Kidney (tissue), 22 donors: ENCODE measurements at regions of chr15 and their contacts with region 1.

Region 1: DNA sequence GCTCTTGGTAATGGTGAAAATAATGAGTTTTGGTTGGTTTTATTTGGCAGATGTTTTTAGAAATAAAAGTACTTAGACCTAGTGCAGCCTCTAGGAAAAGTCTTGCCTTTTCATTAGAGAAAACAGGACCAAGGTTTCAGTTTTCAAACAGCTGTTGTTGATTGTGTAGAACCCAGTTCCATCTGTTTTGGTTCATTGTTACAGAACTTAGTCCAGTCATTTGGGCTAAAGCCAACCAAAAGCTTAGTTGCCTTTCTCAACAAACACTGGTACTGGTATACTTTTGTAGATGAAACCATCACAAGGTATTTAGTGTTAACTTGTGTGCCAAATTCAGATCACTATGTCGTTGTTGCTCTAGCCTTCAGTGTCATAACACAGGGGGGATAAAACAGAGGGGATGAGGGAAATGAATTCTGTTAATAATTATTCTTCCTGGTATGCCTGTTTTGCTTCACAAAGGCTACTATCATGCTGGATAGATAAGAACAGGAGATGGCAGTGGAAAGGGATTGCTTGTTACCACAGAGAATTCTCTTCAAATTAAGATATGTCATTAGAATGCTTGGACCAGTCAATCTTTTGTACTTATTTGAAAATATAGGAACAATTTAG is 12.6 kb upstream of the APH1B start:
- DNase-seq: no peak
- H3K4me3 ChIP-seq: no peak overlapping the region
- H3K27ac ChIP-seq: no peak overlapping the region
- H3K4me1 ChIP-seq: no peaks in the 10 kb centered on the region
- H3K27me3 ChIP-seq: no peaks in the 10 kb centered on the region
- CTCF ChIP-seq: no peak

Region 2: GRCh38 chr15:63178030-63178429 is 86.8 kb before region 1 on chr15:
- intact Hi-C with region 1: no loop called
- DNase-seq: no peak
- H3K4me3 ChIP-seq: no peak overlapping the region
- H3K27ac ChIP-seq: no peak overlapping the region
- H3K4me1 ChIP-seq: no peaks in the 10 kb centered on the region
- H3K27me3 ChIP-seq: no peaks in the 10 kb centered on the region
- CTCF ChIP-seq: no peak

Region 3: DNA sequence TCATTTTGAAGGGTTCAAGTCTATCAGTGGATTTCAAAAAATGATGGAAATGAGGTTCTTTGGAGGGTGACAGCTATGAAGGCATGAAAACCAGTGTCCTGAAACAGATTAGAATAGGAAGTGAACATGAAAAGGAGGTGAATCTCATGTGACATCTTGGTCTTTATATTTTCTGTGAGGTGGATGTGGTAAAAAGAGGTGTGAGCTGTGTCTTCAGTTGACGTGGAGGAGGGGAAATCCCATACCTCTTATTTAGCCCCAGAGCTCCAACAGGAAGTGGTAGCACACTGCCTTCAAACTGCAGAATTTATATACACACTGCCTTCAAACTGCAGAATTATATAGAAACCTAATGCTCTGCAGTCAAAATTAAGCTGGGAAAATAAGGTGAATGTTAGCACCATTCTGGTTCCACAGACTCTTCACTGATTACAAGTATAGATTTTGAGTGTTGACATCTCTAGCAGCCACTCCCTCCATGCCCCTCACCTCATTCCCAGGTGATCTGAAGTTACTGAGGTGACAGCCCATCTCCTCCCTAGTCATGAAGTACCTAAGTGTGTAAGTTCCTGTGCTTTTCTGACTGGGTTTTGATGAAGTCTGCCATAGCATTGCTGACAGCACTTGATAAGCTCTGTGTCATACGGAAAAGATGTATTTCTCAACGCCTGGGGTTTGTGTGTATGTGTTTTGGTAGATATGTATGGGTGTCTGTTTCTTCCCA is 72.7 kb before region 1 on chr15:
- intact Hi-C with region 1: loop called (anchors 10 kb)
- DNase-seq: no peak
- H3K4me3 ChIP-seq: no peak overlapping the region
- H3K27ac ChIP-seq: peak overlapping the region in 1 of 2 donors; percentile 50
- H3K4me1 ChIP-seq: peaks cover 0 to 15% (median 7%) of the 10 kb centered on the region in 3 donors
- H3K27me3 ChIP-seq: no peaks in the 10 kb centered on the region
- CTCF ChIP-seq: no peak

Region 4: GRCh38 chr15:63389902-63390670 is 125.3 kb after region 1 on chr15:
- intact Hi-C with region 1: no loop called
- DNase-seq: peak in 3 of 5 donors; percentile 50 to 93 (median 52)
- H3K4me3 ChIP-seq: no peak overlapping the region
- H3K27ac ChIP-seq: no peak overlapping the region
- H3K4me1 ChIP-seq: peaks cover 0 to 13% (median 9%) of the 10 kb centered on the region in 3 donors
- H3K27me3 ChIP-seq: no peaks in the 10 kb centered on the region
- CTCF ChIP-seq: no peak